ENCODE measurements at regions of chr6 and their contacts with region 1.

Region 1: DNA sequence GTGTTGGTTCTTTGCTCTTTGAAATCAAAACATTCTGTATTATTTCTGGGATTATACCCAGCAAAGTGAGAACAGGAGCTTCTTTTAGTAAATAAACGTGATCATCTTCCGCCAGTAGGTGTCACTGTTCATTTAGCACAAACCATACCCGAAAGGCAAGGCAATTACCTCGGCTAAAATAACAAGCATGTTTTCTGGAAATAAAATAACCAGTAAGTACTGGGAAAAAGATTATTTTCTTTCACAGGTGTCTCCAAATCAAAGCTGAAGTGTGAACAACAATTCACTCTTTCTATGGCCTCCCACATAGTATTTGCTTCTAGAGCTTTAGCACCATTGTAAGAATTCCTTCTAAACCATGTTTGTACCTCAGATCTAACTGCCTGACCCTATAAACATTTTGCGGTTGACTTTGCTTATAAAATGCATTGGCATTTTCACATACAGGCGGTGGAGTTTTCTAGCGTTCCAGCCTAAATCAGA is 144.6 kb upstream of the AGPAT4 start:
- DNase-seq: peak; percentile 39
- H3K27ac ChIP-seq: no peak overlapping the region
- CTCF ChIP-seq: peak; percentile 77

Region 2: GRCh38 chr6:161393839-161394364 is 24.6 kb before region 1 on chr6:
- CTCF ChIA-PET with region 1: interaction called, 20 read pairs
- POLR2A ChIA-PET with region 1: no interaction called
- DNase-seq: peak; percentile 89
- H3K27ac ChIP-seq: no peak overlapping the region
- CTCF ChIP-seq: peak; percentile 72

Region 3: DNA sequence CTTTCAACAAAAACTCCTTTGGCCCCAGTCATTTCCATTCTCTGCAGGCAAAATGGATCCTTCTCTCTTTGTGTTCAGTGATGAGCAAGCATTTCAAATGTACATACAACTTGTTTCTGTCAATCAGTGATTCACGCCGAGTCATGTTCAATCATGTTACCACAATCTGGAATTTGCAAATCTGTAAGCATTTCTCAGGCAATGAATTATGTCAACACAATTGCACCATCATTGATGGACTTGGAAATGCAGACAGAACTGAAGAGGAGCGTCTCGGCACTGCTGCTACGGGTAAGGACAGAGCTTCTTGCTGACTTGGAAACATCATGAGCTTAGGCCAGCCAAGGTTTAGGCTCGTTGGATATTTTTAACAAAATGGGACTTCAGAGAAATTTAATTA is 11.9 kb before region 1 on chr6:
- CTCF ChIA-PET with region 1: interaction called, 12 read pairs
- POLR2A ChIA-PET with region 1: no interaction called
- DNase-seq: peak; percentile 86
- H3K27ac ChIP-seq: no peak overlapping the region
- CTCF ChIP-seq: no peak

Region 4: GRCh38 chr6:161498359-161498758 is 79.9 kb after region 1 on chr6:
- CTCF ChIA-PET with region 1: interaction called, 23 read pairs
- POLR2A ChIA-PET with region 1: no interaction called
- DNase-seq: peak; percentile 68
- H3K27ac ChIP-seq: no peak overlapping the region
- CTCF ChIP-seq: peak; percentile 58